Dendritic cell treated with granulocyte-macrophage colony-stimulating factor and Interleukin-4, amounts not matched to agents 40 ng/mL and 50 ng/mL, for 4 days (primary cell): ENCODE measurements at regions of chr1 and their contacts with region 1.

Region 1: DNA sequence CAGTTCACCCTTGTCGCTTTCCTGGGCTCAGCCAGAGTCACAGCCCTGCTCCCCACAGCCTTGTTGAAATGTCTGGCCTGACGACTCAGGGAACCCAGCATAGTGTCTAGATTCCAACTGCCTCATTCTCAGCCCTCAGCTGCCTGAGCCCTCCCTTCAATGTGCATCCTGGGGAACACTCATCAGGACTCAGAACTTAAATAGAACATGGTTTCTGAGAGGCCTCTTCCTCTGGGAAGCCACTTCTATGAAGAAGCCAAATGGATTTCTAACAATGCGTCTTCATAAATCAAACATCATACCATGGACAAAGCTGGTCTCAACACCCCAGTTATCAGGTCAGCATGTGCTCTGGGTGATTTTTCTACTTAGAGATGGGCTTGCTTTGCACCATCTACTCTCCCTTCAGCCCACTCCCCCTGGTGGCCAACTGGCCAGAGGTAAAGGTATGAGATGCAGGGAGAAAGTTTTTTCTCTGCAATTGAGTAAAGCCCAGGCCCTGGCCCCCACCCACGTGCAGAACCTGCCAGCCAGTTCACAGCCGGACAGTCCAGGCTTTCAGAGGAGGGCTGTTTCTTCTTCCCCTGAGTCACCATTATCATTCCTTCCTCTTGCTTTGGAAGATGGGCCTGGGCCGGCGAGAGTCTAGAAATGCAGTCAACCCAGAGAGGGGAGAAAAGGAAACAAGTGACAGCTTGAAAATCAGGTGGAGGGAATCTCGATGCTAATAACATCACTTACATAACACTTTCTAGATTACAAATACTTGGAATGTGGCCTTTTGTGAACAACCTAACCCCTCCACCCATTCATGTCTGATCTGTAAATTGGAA is 32.1 kb downstream of the CD244 start:
- H3K4me3 Mint-ChIP-seq: no peak overlapping the region
- H3K27ac Mint-ChIP-seq: no peak overlapping the region
- H3K4me1 Mint-ChIP-seq: peaks cover 10% of the 10 kb centered on the region
- H3K27me3 Mint-ChIP-seq: no peaks in the 10 kb centered on the region

Region 2: GRCh38 chr1:160428655-160429054 is 401.9 kb before region 1 on chr1:
- intact Hi-C with region 1: loop called (anchors 10 kb)
- H3K4me3 Mint-ChIP-seq: no peak overlapping the region
- H3K27ac Mint-ChIP-seq: peak overlapping the region; percentile 63
- H3K4me1 Mint-ChIP-seq: peaks cover 37% of the 10 kb centered on the region
- H3K27me3 Mint-ChIP-seq: no peaks in the 10 kb centered on the region

Region 3: GRCh38 chr1:160681067-160681890 is 149.3 kb before region 1 on chr1:
- intact Hi-C with region 1: loop called (anchors 5 kb)
- H3K4me3 Mint-ChIP-seq: no peak overlapping the region
- H3K27ac Mint-ChIP-seq: peak overlapping the region; percentile 65
- H3K4me1 Mint-ChIP-seq: peaks cover 67% of the 10 kb centered on the region
- H3K27me3 Mint-ChIP-seq: no peaks in the 10 kb centered on the region

Region 4: GRCh38 chr1:160726498-160727315 is 103.8 kb before region 1 on chr1:
- intact Hi-C with region 1: loop called (anchors 1 kb)
- H3K4me3 Mint-ChIP-seq: no peak overlapping the region
- H3K27ac Mint-ChIP-seq: no peak overlapping the region
- H3K4me1 Mint-ChIP-seq: peaks cover 22% of the 10 kb centered on the region
- H3K27me3 Mint-ChIP-seq: no peaks in the 10 kb centered on the region

Region 5: DNA sequence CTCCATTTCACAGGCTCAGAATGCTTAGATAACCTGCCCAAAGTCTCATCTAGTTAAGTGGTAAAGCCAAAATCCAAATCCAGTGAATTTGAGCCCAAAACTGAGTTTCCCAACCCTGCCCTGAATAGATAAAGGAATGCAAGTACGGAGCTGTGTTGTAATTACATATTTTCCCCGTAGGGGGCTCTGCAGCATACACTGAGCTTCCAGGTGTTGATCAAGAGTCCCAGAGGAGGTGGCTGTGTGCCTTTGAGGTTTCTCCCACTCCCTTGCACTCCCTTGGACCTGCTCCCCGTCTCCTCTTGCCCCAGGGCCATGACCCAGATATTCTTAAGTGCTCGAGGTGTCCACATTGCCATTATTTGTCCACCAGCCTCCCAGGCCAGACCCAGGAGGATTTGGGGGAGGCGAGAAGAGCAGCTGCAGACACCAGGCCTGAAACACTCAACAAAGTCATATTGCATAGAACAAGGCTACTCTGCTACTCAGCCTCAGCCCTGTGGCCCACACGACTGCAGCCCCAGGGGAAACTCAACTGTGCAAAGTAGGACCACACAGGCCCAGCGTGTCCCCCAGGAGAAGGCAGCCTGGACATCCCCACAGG is 52.9 kb before region 1 on chr1:
- intact Hi-C with region 1: loop called (anchors 5 kb)
- H3K4me3 Mint-ChIP-seq: no peak overlapping the region
- H3K27ac Mint-ChIP-seq: no peak overlapping the region
- H3K4me1 Mint-ChIP-seq: peaks cover 31% of the 10 kb centered on the region
- H3K27me3 Mint-ChIP-seq: peaks cover 4% of the 10 kb centered on the region